A673 (cell line): ENCODE measurements at regions of chr13 and their contacts with region 1.

Region 1: DNA sequence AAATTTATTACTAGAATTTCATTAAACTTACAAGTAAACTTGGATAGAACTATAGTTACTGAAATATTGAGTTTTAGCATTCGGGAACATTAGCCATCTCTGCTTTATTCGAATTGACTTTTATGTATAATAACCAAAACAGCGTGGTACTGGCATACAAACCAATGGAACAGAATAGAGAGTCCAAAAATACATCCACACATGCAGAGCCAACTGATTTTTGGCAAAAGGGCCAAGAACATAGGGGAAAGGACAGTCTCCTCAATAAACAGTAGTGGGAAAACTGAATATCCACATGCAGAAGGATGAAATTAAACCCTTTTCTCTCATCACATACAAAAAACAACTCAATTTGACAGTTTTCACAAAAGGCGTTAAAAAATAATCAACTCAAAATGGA is 84.3 kb downstream of the EPSTI1 start:
- DNase-seq: no peak
- H3K4me3 ChIP-seq: no peak overlapping the region
- H3K27ac ChIP-seq: no peak overlapping the region
- H3K4me1 ChIP-seq: no peaks in the 10 kb centered on the region
- H3K27me3 ChIP-seq: no peaks in the 10 kb centered on the region
- CTCF ChIP-seq: no peak

Region 2: DNA sequence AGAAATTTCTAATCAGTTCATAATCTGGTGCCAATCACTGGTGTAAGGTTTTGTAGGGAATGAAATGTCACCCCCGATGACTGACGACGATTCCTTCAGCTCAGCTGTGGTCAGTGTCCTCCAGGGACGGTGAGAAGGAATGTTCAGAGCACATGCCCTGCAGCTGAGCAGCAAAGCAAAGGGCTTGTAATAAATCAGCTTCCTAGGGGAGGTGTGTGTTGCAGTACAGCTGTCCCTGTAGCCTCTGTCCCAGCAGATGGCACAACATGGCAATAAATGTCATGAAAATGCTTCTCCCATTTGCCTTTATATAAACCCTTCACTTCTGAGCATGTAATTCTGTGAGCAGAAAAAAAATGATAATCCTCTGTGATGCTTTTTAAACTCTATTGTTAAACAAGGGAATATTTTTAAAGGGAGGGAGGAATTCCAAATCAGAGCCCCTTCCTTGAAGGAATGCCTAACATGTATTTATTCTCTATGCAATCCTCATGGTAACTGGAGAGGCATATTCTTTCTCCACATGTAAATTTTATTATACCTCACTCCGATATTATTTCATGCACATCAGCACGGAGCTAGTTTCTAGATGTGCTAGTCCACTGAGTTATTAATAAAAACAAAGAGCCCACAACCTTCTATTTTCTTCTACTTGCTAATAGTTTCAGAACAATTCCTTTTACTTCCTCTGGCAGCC is 23.8 kb before region 1 on chr13:
- CTCF ChIA-PET with region 1: no interaction called
- POLR2A ChIA-PET with region 1: no interaction called
- intact Hi-C with region 1: loop called (anchors 2 kb)
- DNase-seq: no peak
- H3K4me3 ChIP-seq: no peak overlapping the region
- H3K27ac ChIP-seq: no peak overlapping the region
- H3K4me1 ChIP-seq: no peaks in the 10 kb centered on the region
- H3K27me3 ChIP-seq: no peaks in the 10 kb centered on the region
- CTCF ChIP-seq: no peak

Region 3: GRCh38 chr13:43289470-43290255 is 381.9 kb after region 1 on chr13:
- CTCF ChIA-PET with region 1: no interaction called
- POLR2A ChIA-PET with region 1: no interaction called
- intact Hi-C with region 1: no loop called
- DNase-seq: no peak
- H3K4me3 ChIP-seq: no peak overlapping the region
- H3K27ac ChIP-seq: no peak overlapping the region
- H3K4me1 ChIP-seq: peaks cover 35% of the 10 kb centered on the region
- H3K27me3 ChIP-seq: no peaks in the 10 kb centered on the region
- CTCF ChIP-seq: no peak

Region 4: GRCh38 chr13:43356567-43356966 is 448.8 kb after region 1 on chr13:
- CTCF ChIA-PET with region 1: no interaction called
- POLR2A ChIA-PET with region 1: no interaction called
- intact Hi-C with region 1: no loop called
- DNase-seq: no peak
- H3K4me3 ChIP-seq: no peak overlapping the region
- H3K27ac ChIP-seq: no peak overlapping the region
- H3K4me1 ChIP-seq: peaks cover 19% of the 10 kb centered on the region
- H3K27me3 ChIP-seq: no peaks in the 10 kb centered on the region
- CTCF ChIP-seq: no peak